Activated CD8-positive, alpha-beta T cell treated with anti-CD3 and anti-CD28 coated beads, Interleukin-2, amount 10 ng/mL, durations not matched to agents 7 days and 5 days (primary cell): ENCODE measurements at regions of chr1 and their contacts with region 1.

Region 1: GRCh38 chr1:23098463-23099170 is 70.0 kb downstream of the LUZP1 start:
- DNase-seq: peak; percentile 77
- ATAC-seq: peak; percentile 32
- H3K4me3 Mint-ChIP-seq: no peak overlapping the region
- H3K27ac Mint-ChIP-seq: no peak overlapping the region
- H3K4me1 Mint-ChIP-seq: peaks cover 44% of the 10 kb centered on the region
- H3K27me3 Mint-ChIP-seq: no peaks in the 10 kb centered on the region

Region 2: GRCh38 chr1:23108918-23109533 is 10.4 kb after region 1 on chr1:
- CTCF ChIA-PET with region 1: interaction called, 92 read pairs
- POLR2A ChIA-PET with region 1: no interaction called
- DNase-seq: no peak
- ATAC-seq: no peak
- H3K4me3 Mint-ChIP-seq: no peak overlapping the region
- H3K27ac Mint-ChIP-seq: no peak overlapping the region
- H3K4me1 Mint-ChIP-seq: peaks cover 32% of the 10 kb centered on the region
- H3K27me3 Mint-ChIP-seq: no peaks in the 10 kb centered on the region

Region 3: DNA sequence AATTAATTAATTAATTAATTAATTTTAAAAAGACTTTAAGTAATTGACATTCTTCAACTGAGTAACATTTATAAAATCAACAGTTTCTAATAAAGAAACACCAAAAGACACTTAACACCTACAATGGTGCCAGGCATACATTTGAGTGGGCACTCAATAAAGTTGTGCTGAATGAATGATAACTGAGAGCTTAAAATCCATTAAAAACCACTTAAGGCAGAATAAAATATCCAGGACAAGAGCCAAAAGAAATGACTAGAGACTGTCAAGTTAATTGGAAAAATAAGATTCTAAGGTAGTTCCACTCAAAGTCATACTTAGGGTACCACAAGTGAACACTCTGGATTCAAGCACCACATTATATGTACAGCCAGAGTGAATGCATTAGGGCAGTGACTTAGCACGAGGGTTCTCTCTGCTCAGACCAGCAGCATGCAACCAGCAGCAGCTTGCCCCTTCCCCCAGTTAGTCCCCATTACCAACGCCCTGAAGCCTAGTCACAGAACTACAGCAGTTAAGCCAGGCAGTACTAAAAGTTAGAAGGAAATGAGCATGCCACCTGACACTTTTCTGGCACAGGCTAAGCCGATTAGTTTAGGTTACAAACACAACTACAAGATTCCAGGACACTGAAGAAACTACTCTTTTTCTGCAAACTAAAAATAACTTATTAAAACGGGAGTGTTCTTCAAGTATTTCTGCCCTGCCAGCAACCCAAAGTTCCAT is 23.6 kb after region 1 on chr1:
- CTCF ChIA-PET with region 1: interaction called, 46 read pairs
- POLR2A ChIA-PET with region 1: interaction called, 6 read pairs
- DNase-seq: no peak
- ATAC-seq: no peak
- H3K4me3 Mint-ChIP-seq: no peak overlapping the region
- H3K27ac Mint-ChIP-seq: no peak overlapping the region
- H3K4me1 Mint-ChIP-seq: peaks cover 32% of the 10 kb centered on the region
- H3K27me3 Mint-ChIP-seq: no peaks in the 10 kb centered on the region

Region 4: DNA sequence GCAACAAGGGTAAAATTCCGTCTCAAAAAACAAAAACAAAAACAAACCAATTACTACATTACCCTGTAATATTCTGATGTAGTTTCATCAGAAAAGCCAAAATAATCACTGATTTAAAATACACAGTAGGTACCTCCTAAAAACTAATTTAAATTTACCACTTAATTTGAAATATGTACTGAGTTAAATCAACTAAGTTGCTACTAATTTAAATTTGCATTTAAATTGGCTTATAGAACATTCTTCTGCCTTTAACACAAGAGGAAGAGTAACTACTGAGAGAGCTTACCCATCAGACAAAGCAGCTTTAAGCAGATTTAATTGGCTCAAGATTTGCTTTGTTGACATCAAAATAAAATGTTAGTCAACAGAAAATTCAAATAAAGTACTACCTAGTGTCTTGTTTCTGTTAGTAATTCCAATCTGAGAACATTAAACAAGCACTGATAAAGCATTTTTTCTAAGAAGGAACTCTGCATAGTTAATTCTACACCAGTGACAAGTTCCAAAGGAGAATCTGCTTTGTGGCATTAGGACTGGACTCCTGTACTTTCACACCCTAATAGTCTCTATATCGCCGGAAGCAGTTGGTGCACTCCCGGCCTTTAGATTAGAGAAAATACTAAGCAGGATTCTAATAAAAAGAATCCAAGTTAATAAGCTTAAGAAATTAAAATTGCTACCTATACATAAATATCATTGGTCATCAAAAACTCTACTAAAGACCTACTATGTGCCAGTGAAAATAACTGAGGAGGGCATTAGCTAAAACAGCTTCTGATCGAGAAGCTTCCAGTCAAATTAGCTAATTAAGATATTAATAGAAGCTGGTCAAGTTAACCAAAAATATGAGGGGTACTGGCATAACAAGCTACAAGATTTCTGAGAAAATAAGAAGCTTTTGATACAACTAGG is 61.6 kb after region 1 on chr1:
- CTCF ChIA-PET with region 1: interaction called, 24 read pairs
- POLR2A ChIA-PET with region 1: no interaction called
- DNase-seq: no peak
- ATAC-seq: no peak
- H3K4me3 Mint-ChIP-seq: no peak overlapping the region
- H3K27ac Mint-ChIP-seq: no peak overlapping the region
- H3K4me1 Mint-ChIP-seq: peaks cover 2% of the 10 kb centered on the region
- H3K27me3 Mint-ChIP-seq: no peaks in the 10 kb centered on the region

Region 5: GRCh38 chr1:23177438-23178380 is 79.1 kb after region 1 on chr1:
- CTCF ChIA-PET with region 1: interaction called, 735 read pairs
- POLR2A ChIA-PET with region 1: interaction called, 3 read pairs
- DNase-seq: peak; percentile 59
- ATAC-seq: peak; percentile 83
- H3K4me3 Mint-ChIP-seq: peak overlapping the region; percentile 59
- H3K27ac Mint-ChIP-seq: no peak overlapping the region
- H3K4me1 Mint-ChIP-seq: peaks cover 21% of the 10 kb centered on the region
- H3K27me3 Mint-ChIP-seq: peaks cover 36% of the 10 kb centered on the region